ENCODE measurements at regions of chr1 and their contacts with region 1.

Region 1: GRCh38 chr1:109397538-109398342 is at the start of gene SORT1:
- DNase-seq: peak; percentile 65
- H3K4me3 Mint-ChIP-seq: peak within 1 kb of the TSS; percentile 65
- H3K27ac Mint-ChIP-seq: no peak within 1 kb of the TSS
- H3K4me1 Mint-ChIP-seq: peaks cover 7% of the 10 kb centered on the region
- H3K27me3 Mint-ChIP-seq: peaks cover 37% of the 10 kb centered on the region
- total RNA-seq, gene SORT1: 0.31 to 0.51 TPM

Region 2: DNA sequence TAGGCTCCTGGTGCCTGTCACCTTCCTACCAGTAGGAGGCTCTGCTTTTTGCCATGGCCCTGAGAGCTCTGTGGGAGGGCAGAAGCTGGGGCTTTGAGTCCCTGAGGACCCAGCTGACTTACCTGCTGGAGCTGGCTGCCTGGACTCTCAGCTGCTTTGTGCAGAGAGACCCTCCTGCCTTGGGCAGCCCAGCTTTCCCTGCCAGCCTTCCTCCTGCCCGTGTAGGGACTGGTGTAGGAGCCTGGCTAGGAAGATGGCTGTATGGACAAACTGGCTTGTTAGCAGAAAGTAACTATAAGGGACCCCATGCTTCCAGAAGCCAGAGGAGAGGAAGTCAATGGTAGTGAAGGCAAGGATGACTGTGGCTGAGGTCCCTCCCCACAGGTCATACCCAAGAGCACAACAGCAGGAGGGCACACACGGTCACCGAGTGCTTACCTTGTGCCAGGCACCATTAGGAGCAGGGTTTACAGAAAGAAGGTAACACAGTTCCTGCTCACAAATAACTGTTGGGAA is 158.1 kb before region 1 on chr1:
- CTCF ChIA-PET with region 1: interaction called, 13 read pairs
- POLR2A ChIA-PET with region 1: no interaction called
- intact Hi-C with region 1: no loop called
- DNase-seq: peak; percentile 44
- H3K4me3 Mint-ChIP-seq: no peak overlapping the region
- H3K27ac Mint-ChIP-seq: peak overlapping the region; percentile 29
- H3K4me1 Mint-ChIP-seq: peaks cover 16% of the 10 kb centered on the region
- H3K27me3 Mint-ChIP-seq: peaks cover 4% of the 10 kb centered on the region

Region 3: GRCh38 chr1:109263597-109264398 is 133.9 kb before region 1 on chr1:
- CTCF ChIA-PET with region 1: interaction called, 72 read pairs
- POLR2A ChIA-PET with region 1: no interaction called
- intact Hi-C with region 1: loop called (anchors 1 kb)
- DNase-seq: peak; percentile 86
- H3K4me3 Mint-ChIP-seq: no peak overlapping the region
- H3K27ac Mint-ChIP-seq: no peak overlapping the region
- H3K4me1 Mint-ChIP-seq: peaks cover 1% of the 10 kb centered on the region
- H3K27me3 Mint-ChIP-seq: no peaks in the 10 kb centered on the region

Region 4: GRCh38 chr1:109282952-109283747 is 114.6 kb before region 1 on chr1 and contains the start of gene PSRC1:
- CTCF ChIA-PET with region 1: interaction called, 205 read pairs
- POLR2A ChIA-PET with region 1: interaction called, 6 read pairs
- intact Hi-C with region 1: no loop called
- DNase-seq: peak; percentile 94
- H3K4me3 Mint-ChIP-seq: peak within 1 kb of the TSS; percentile 95
- H3K27ac Mint-ChIP-seq: peak within 1 kb of the TSS; percentile 89
- H3K4me1 Mint-ChIP-seq: peaks cover 12% of the 10 kb centered on the region
- H3K27me3 Mint-ChIP-seq: no peaks in the 10 kb centered on the region
- total RNA-seq, gene PSRC1: 14.9 to 16.3 TPM

Region 5: DNA sequence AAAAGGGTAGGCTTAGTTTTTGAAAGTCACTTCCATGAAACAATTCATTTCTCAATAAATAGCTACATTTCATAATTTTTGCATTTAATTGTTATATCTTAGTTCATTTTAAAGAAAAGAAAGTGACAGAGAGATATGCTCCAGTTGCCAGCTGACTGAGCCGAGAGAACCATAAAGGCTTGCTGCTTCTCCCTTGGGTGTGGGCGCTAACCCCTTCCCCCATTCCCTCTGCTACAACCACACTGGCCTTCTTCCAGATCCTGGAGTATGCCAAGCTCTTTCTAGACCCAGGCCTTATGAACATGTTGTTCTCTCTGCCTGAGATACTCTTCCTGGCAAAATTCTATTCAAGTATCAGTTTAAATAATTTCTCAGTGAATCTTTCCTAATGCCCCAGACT is 12.3 kb before region 1 on chr1:
- CTCF ChIA-PET with region 1: interaction called, 12 read pairs
- POLR2A ChIA-PET with region 1: no interaction called
- intact Hi-C with region 1: no loop called
- DNase-seq: no peak
- H3K4me3 Mint-ChIP-seq: no peak overlapping the region
- H3K27ac Mint-ChIP-seq: no peak overlapping the region
- H3K4me1 Mint-ChIP-seq: peaks cover 2% of the 10 kb centered on the region
- H3K27me3 Mint-ChIP-seq: peaks cover 13% of the 10 kb centered on the region

Measured in activated CD4-positive, alpha-beta memory T cell treated with anti-CD3 and anti-CD28 coated beads for 36 hours (primary cell).